Mammary epithelial cell (primary cell): ENCODE measurements at regions of chr11 and their contacts with region 1.

Region 1: GRCh38 chr11:102940714-102941588 is 14.6 kb downstream of the MMP13 start:
- DNase-seq: peak; percentile 66
- H3K4me3 ChIP-seq: no peak overlapping the region
- H3K27ac ChIP-seq: no peak overlapping the region
- H3K4me1 ChIP-seq: peaks cover 3% of the 10 kb centered on the region
- H3K27me3 ChIP-seq: no peaks in the 10 kb centered on the region
- CTCF ChIP-seq: peak; percentile 68 to 74

Region 2: GRCh38 chr11:102680945-102681344 is 260.0 kb before region 1 on chr11:
- CTCF ChIA-PET with region 1: no interaction called
- dilution Hi-C with region 1: no loop called
- in situ Hi-C with region 1: no loop called
- intact Hi-C with region 1: loop called (anchors 5 kb)
- DNase-seq: peak; percentile 24
- H3K4me3 ChIP-seq: no peak overlapping the region
- H3K27ac ChIP-seq: no peak overlapping the region
- H3K4me1 ChIP-seq: peaks cover 14% of the 10 kb centered on the region
- H3K27me3 ChIP-seq: no peaks in the 10 kb centered on the region
- CTCF ChIP-seq: no peak

Region 3: DNA sequence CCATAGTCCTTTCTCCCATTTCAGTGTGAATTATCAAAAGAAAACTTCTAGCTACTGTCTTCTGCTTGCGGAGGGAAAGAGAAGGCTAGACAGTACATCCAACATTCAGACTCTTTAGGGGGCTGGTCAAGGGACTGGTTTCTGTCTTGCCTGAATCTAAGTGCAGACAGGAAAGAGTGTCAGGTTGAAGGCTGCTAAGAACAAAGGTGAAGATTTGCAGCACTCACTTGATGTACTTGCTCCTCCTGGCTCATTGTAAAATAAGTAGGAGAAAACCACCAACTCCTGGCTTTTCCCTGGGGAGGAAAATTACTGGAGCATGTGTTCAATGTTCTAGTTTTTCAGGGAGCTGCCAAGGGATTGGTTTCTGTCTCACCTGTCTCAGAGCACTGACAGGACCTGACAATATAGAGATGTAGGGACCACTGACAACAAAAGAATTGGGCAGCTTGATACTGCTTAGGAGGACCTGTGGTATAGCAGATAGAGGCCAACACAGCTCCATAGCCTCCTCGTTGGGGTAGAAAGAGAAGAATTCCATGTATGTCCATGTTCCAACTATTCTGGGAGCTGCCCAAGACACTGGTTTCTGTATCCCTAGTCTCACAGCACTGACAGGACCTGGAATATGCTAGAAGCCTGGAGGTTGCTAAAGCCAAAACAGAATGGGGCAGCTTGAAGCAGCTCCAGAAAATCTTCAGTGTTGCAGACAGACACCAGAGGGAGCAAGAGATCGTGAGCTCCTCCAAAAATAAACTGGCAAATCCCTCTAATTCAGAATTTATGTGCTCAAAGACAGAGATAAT is 26.5 kb before region 1 on chr11:
- CTCF ChIA-PET with region 1: interaction called, 15 read pairs
- dilution Hi-C with region 1: no loop called
- in situ Hi-C with region 1: no loop called
- intact Hi-C with region 1: loop called (anchors 1 kb)
- DNase-seq: peak; percentile 28
- H3K4me3 ChIP-seq: no peak overlapping the region
- H3K27ac ChIP-seq: no peak overlapping the region
- H3K4me1 ChIP-seq: peaks cover 13% of the 10 kb centered on the region
- H3K27me3 ChIP-seq: no peaks in the 10 kb centered on the region
- CTCF ChIP-seq: peak; percentile 74 to 85

Region 4: DNA sequence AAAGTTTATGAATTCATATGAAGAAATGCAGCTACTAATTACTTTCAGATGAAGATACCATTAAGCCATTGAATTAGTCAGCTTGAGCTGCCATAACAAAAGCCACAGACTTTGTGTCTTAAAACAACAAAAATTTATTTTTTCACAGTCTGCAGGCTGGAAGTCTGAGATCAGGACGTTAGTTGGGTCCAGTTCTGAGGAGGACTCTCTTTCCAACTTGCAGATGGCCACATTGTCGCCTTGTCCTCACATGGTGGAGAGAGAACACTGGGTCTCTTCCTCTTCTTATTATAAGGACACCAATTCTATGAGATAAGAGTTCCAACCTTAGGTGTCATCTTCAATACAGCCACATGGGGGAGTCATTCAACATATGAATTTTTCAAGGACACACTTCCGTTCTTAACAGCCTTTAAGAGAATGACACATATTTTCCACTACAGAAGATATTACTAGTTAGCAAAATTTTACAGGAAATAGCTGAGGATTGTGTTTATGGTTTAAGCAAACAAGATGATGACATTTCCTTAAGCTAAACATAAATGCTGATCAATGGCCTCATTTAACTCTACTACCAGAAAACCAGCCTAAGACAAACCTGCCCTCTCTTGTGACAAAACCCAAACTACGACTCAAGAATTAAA is 95.0 kb after region 1 on chr11:
- CTCF ChIA-PET with region 1: no interaction called
- dilution Hi-C with region 1: no loop called
- in situ Hi-C with region 1: no loop called
- intact Hi-C with region 1: loop called (anchors 5 kb)
- DNase-seq: peak; percentile 61
- H3K4me3 ChIP-seq: no peak overlapping the region
- H3K27ac ChIP-seq: no peak overlapping the region
- H3K4me1 ChIP-seq: peaks cover 3% of the 10 kb centered on the region
- H3K27me3 ChIP-seq: no peaks in the 10 kb centered on the region
- CTCF ChIP-seq: peak; percentile 62 to 67

Region 5: GRCh38 chr11:103055221-103055890 is 114.4 kb after region 1 on chr11:
- CTCF ChIA-PET with region 1: no interaction called
- dilution Hi-C with region 1: no loop called
- in situ Hi-C with region 1: no loop called
- intact Hi-C with region 1: loop called (anchors 2 kb)
- DNase-seq: peak; percentile 33
- H3K4me3 ChIP-seq: no peak overlapping the region
- H3K27ac ChIP-seq: no peak overlapping the region
- H3K4me1 ChIP-seq: no peaks in the 10 kb centered on the region
- H3K27me3 ChIP-seq: no peaks in the 10 kb centered on the region
- CTCF ChIP-seq: peak; percentile 61 to 67